MCF 10A (cell line): ENCODE measurements at regions of chr17 and their contacts with region 1.

Region 1: DNA sequence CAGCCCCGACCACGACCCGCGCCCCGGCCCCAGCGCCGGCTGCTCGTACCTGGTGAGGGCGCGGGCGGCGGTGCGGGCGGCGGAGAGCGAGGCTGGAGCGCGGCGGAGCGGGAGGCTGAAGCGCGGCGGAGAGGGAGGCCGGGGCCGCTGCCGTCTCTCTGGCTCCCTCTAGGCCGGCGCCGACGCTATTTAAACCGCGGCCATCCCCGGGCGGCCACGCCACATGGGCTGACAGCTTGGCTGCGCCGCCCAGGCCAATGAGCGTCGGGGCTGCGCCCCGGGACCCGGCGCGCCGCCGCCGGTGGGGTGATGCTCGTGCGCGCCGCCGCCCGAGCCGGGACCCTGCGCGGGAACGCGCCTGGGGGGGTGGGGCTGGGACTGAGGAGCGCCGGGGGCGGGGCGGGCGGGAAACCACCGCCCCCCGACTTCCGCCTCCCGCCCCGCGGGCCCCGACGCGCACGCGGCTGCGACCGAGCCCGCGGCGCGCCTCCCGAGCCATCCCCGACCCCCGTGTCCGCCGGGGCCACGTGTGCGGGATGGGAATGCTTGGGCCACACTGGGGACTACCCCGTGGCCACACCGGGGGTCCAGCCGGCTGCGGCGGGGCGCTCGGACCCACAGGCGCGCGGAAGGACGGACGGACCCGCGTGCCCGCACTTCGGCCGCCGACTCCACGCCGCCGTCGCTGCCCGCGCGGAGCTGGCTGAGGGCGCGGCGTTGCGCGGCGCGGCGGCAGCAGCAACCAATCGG is at the start of gene FASN:
- DNase-seq: peak; percentile 94
- H3K4me3 Mint-ChIP-seq: peak within 1 kb of the TSS; percentile 75
- H3K27ac Mint-ChIP-seq: peak within 1 kb of the TSS; percentile 66
- H3K4me1 Mint-ChIP-seq: no peaks in the 10 kb centered on the region
- H3K27me3 Mint-ChIP-seq: no peaks in the 10 kb centered on the region
- CTCF ChIP-seq: peak; percentile 32
- total RNA-seq, gene FASN: 114 and 120 TPM in 2 replicates

Region 2: GRCh38 chr17:82013341-82013740 is 84.9 kb before region 1 on chr17:
- CTCF ChIA-PET with region 1: no interaction called
- POLR2A ChIA-PET with region 1: no interaction called
- intact Hi-C with region 1: no loop called
- DNase-seq: no peak
- H3K4me3 Mint-ChIP-seq: no peak overlapping the region
- H3K27ac Mint-ChIP-seq: no peak overlapping the region
- H3K4me1 Mint-ChIP-seq: no peaks in the 10 kb centered on the region
- H3K27me3 Mint-ChIP-seq: no peaks in the 10 kb centered on the region
- CTCF ChIP-seq: no peak

Region 3: GRCh38 chr17:82037113-82037888 is 60.9 kb before region 1 on chr17 and contains the start of gene DCXR:
- CTCF ChIA-PET with region 1: no interaction called
- POLR2A ChIA-PET with region 1: interaction called, 7 read pairs
- intact Hi-C with region 1: loop called (anchors 10 kb)
- DNase-seq: peak; percentile 96
- H3K4me3 Mint-ChIP-seq: peak within 1 kb of the TSS; percentile 82
- H3K27ac Mint-ChIP-seq: peak within 1 kb of the TSS; percentile 88
- H3K4me1 Mint-ChIP-seq: peaks cover 8% of the 10 kb centered on the region
- H3K27me3 Mint-ChIP-seq: no peaks in the 10 kb centered on the region
- CTCF ChIP-seq: peak; percentile 71
- total RNA-seq, gene DCXR: 77.9 and 111 TPM in 2 replicates

Region 4: DNA sequence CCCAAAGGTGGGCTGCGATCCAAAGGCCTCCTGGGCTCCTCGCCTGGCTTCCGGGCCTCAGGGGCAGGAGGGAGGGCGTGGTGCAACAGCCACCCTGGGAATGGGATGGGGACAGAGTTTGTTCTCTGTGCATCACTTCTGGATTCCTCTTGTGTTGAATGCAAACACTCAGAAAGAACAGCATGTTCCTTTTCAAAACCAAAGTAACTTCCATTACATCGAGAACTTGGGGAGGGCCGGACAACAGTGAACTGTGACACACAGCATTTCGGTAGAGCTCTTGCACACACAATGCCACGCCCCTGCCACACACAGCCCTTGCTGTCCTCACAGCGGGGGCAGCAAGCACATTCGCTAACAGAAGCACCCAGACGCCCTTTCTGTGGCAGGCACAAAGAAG is 35.9 kb after region 1 on chr17:
- CTCF ChIA-PET with region 1: interaction called, 3 read pairs
- POLR2A ChIA-PET with region 1: interaction called, 39 read pairs
- intact Hi-C with region 1: no loop called
- DNase-seq: peak; percentile 82
- H3K4me3 Mint-ChIP-seq: peak overlapping the region; percentile 55
- H3K27ac Mint-ChIP-seq: peak overlapping the region; percentile 98
- H3K4me1 Mint-ChIP-seq: peaks cover 15% of the 10 kb centered on the region
- H3K27me3 Mint-ChIP-seq: no peaks in the 10 kb centered on the region
- CTCF ChIP-seq: no peak

Region 5: DNA sequence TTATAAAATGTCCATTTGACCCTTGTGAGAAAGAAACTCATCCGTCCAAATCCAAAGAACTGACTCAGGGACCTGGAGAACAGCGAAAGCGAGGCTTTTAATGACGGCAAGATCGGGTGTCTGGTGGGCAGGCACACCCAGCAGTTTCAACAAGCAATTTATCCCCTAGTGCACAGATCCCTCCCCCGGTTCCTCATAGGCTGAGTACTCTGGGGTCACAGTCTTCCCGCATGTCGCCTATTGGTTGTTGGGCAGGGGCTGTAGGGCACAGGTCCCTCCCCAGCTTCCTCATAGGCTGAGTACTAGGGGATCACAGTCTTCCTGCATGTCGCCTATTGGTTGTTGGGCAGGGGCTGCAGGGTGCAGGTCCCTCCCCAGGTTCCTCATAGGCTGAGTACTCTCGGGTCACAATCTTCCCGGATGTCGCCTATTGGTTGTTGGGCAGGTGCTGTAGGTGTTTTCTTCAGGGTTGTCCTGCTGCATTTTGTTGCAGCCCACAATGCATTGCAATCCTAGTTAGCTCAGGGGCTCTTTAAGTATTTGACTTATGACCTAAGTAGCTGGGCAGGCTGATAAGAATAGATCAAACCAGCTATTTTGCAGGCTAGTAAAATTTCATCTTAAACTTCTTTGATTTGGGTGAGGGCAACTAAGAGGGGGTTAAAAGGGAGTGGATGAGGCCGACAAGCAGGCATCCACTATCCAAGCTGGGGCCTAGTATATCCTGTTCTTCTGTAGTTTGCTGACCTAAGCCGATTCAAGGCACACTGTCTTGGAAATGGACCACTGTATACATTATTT is 269.7 kb after region 1 on chr17:
- CTCF ChIA-PET with region 1: no interaction called
- POLR2A ChIA-PET with region 1: no interaction called
- intact Hi-C with region 1: no loop called
- DNase-seq: no peak
- H3K4me3 Mint-ChIP-seq: no peak overlapping the region
- H3K27ac Mint-ChIP-seq: no peak overlapping the region
- H3K4me1 Mint-ChIP-seq: no peaks in the 10 kb centered on the region
- H3K27me3 Mint-ChIP-seq: peaks cover 10% of the 10 kb centered on the region
- CTCF ChIP-seq: no peak